Endothelial cell of umbilical vein (primary cell): ENCODE measurements at regions of chr12 and their contacts with region 1.

Region 1: DNA sequence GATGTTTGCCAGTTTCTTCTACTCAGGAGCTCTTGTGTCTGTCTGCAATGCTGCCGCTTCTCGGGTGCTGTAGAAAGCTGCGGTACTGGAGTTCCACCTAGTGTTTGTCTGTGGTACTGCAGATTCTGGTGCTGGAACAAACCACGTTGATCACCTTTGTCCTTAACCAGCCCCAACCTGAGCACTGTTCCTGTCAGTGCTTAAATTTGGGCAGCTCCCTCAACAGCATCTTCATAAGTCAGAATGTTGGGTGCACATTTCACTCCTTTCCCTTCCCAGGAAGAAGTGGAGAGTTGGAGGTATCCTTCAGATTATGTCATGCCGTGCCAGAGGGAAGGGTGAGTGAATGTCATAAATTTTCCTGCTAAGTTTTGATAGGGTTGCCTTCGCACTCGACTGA is 48.7 kb upstream of the LALBA start:
- DNase-seq: peak; percentile 75
- H3K4me3 ChIP-seq: no peak overlapping the region
- H3K27ac ChIP-seq: no peak overlapping the region
- H3K4me1 ChIP-seq: no peaks in the 10 kb centered on the region
- H3K27me3 ChIP-seq: peaks cover 12 to 15% of the 10 kb centered on the region in 2 experiments
- CTCF ChIP-seq: peak; percentile 93 to 95
- POLR2A ChIP-seq: no peak

Region 2: DNA sequence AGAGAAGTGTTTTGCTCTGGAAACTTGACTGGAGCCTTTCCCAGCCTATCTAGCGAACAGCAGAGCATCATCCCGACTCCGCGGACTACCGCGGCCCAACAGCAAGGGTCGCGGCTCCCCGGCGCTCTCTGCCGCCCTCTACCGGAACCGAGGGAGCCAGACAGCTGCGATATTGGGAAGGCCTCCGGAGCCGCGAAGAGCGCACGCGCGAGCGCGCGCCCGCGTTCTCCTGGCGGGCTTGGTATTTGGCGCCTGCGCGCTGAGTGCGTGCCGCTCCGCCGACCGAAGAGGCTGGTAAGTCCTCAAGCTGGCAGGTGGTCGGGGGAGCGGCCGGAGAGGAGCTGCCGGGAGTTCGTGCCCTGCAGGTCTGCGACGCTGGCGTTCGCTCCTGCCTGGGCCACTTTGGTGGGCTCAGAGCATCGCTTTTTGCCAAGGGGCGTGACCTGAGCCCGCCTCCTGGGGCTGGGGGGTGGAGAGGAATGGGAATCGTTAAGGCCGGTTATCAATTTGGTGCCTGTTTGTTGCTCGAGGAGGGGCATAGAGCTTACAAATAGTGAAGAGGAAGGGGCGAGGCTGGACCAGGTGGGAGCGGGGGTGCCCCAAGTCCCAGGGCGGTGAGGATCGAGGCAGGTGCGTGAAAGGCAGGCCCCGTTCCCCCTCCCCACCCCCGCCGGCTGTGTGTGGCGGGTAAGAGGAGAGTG is 655.1 kb before region 1 on chr12 and contains the start of gene TMEM106C:
- CTCF ChIA-PET with region 1: interaction called, 5 read pairs
- POLR2A ChIA-PET with region 1: no interaction called
- dilution Hi-C with region 1: no loop called
- intact Hi-C with region 1: loop called (anchors 10 kb)
- DNase-seq: peak; percentile 93
- H3K4me3 ChIP-seq: peak within 1 kb of the TSS; percentile 59 to 87 (median 70)
- H3K27ac ChIP-seq: no peak within 1 kb of the TSS
- H3K4me1 ChIP-seq: peaks cover 7% of the 10 kb centered on the region
- H3K27me3 ChIP-seq: peaks cover under 1 to 4% of the 10 kb centered on the region in 2 experiments
- CTCF ChIP-seq: peak; percentile 98 to 99
- POLR2A ChIP-seq: peak; percentile 25
- total RNA-seq, gene TMEM106C: 67.7 and 84.4 TPM in 2 replicates

Region 3: GRCh38 chr12:48157018-48157888 is 461.3 kb before region 1 on chr12 and contains the start of gene ASB8:
- CTCF ChIA-PET with region 1: interaction called, 13 read pairs
- POLR2A ChIA-PET with region 1: no interaction called
- dilution Hi-C with region 1: no loop called
- intact Hi-C with region 1: no loop called
- DNase-seq: peak; percentile 99
- H3K4me3 ChIP-seq: peak within 1 kb of the TSS; percentile 35 to 66 (median 54)
- H3K27ac ChIP-seq: peak within 1 kb of the TSS; percentile 0
- H3K4me1 ChIP-seq: peaks cover 3% of the 10 kb centered on the region
- H3K27me3 ChIP-seq: peaks cover 4 to 7% of the 10 kb centered on the region in 2 experiments
- CTCF ChIP-seq: peak; percentile 44 to 54
- POLR2A ChIP-seq: peak; percentile 84
- total RNA-seq, gene ASB8: 26.5 and 29.7 TPM in 2 replicates

Region 4: GRCh38 chr12:48189331-48190125 is 429.0 kb before region 1 on chr12:
- CTCF ChIA-PET with region 1: interaction called, 5 read pairs
- POLR2A ChIA-PET with region 1: no interaction called
- dilution Hi-C with region 1: no loop called
- intact Hi-C with region 1: loop called (anchors 5 kb)
- DNase-seq: peak; percentile 82
- H3K4me3 ChIP-seq: no peak overlapping the region
- H3K27ac ChIP-seq: no peak overlapping the region
- H3K4me1 ChIP-seq: peaks cover 2% of the 10 kb centered on the region
- H3K27me3 ChIP-seq: peaks cover 25 to 38% of the 10 kb centered on the region in 2 experiments
- CTCF ChIP-seq: peak; percentile 62 to 78
- POLR2A ChIP-seq: no peak

Region 5: GRCh38 chr12:48286665-48287064 is 331.9 kb before region 1 on chr12:
- CTCF ChIA-PET with region 1: interaction called, 54 read pairs
- POLR2A ChIA-PET with region 1: no interaction called
- dilution Hi-C with region 1: no loop called
- intact Hi-C with region 1: loop called (anchors 5 kb)
- DNase-seq: no peak
- H3K4me3 ChIP-seq: no peak overlapping the region
- H3K27ac ChIP-seq: no peak overlapping the region
- H3K4me1 ChIP-seq: peaks cover 2% of the 10 kb centered on the region
- H3K27me3 ChIP-seq: peaks cover 3% of the 10 kb centered on the region in 2 experiments
- CTCF ChIP-seq: peak; percentile 25 to 57
- POLR2A ChIP-seq: no peak

Region 6: GRCh38 chr12:48601013-48601756 is 17.4 kb before region 1 on chr12:
- CTCF ChIA-PET with region 1: interaction called, 12 read pairs
- POLR2A ChIA-PET with region 1: no interaction called
- dilution Hi-C with region 1: no loop called
- intact Hi-C with region 1: no loop called
- DNase-seq: no peak
- H3K4me3 ChIP-seq: no peak overlapping the region
- H3K27ac ChIP-seq: no peak overlapping the region
- H3K4me1 ChIP-seq: no peaks in the 10 kb centered on the region
- H3K27me3 ChIP-seq: peaks cover 0 to 3% of the 10 kb centered on the region in 2 experiments
- CTCF ChIP-seq: no peak
- POLR2A ChIP-seq: no peak

Region 7: GRCh38 chr12:48696626-48697025 is 78.1 kb after region 1 on chr12:
- CTCF ChIA-PET with region 1: no interaction called
- POLR2A ChIA-PET with region 1: no interaction called
- dilution Hi-C with region 1: no loop called
- intact Hi-C with region 1: no loop called
- DNase-seq: no peak
- H3K4me3 ChIP-seq: no peak overlapping the region
- H3K27ac ChIP-seq: no peak overlapping the region
- H3K4me1 ChIP-seq: no peaks in the 10 kb centered on the region
- H3K27me3 ChIP-seq: no peaks in the 10 kb centered on the region
- CTCF ChIP-seq: no peak
- POLR2A ChIP-seq: no peak